ENCODE measurements at regions of chrX and their contacts with region 1.

Region 1: GRCh38 chrX:139759637-139760036 is 51.7 kb upstream of the MCF2 start:
- DNase-seq: no peak
- ATAC-seq: no peak
- H3K4me3 ChIP-seq: no peak overlapping the region
- H3K27ac ChIP-seq: no peak overlapping the region
- H3K4me1 ChIP-seq: no peaks in the 10 kb centered on the region
- H3K27me3 ChIP-seq: no peaks in the 10 kb centered on the region
- CTCF ChIP-seq: peak in 7 of 9 donors; percentile 20 to 43 (median 38)

Region 2: DNA sequence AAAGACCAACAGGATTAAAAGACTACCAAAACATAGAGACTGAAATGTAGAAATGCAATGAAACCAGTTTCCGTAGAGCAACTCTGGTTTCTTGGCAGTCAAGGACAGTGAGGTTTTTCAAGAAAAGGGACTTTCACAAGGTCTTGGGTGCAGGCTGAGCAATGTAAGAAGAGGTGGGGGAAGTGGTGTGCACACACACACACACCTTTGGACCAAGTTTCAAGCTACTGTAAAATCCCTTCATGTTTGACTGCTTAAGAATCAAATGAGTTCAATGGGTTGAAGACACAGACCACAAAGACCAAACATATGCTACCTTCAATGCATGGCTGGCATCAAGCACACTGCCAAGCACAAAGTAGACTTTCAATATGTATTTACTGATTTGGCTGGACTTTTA is 33.9 kb before region 1 on chrX:
- intact Hi-C with region 1: loop called in 1 of 10 experiments (anchors 2 kb)
- DNase-seq: no peak
- ATAC-seq: no peak
- H3K4me3 ChIP-seq: no peak overlapping the region
- H3K27ac ChIP-seq: no peak overlapping the region
- H3K4me1 ChIP-seq: no peaks in the 10 kb centered on the region
- H3K27me3 ChIP-seq: peaks cover 0 to 4% (median 0%) of the 10 kb centered on the region in 7 donors
- CTCF ChIP-seq: no peak